ENCODE measurements at regions of chr6 and their contacts with region 1.

Region 1: DNA sequence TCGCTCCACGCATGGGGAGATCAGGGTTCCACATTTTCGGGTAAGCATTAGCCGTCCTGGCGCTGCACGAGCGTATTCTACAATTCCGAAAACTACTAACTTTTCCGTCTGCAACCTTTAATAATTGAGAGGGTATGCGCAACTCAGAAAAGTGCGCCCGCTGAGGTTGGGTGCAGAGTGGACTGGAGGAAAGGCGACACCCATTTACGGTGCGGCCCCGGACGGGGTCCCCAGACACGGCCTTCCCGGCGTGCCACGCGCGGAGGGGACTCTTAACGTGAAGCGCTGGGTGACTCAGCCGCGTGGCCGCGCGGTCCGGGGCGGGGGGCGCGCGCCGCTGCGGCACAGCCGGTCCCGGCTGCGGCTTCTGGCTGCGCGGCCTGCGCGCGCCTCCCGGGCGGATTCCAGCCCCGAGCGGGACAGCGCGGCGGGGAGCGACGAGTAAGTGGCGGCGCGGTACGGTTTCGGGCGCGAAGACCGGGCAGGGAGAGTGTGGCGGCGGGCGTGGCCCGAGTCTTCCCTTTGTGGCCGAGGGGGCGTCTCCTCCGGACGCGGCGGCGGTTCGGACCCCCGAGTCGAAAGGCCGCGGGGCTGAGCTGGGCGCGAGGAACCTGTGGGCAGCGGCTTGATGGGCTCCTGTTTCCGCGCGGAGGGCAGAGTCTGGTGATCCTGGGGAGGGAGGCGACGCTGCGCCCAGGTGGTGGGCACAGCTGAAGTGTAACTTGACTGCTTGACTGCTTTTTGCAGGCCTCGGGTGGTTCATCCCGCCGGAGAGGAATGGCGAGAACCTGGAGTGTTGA is at the starts of genes KCTD20 and PXT1:
- DNase-seq: peak; percentile 93
- H3K4me3 Mint-ChIP-seq: peak within 1 kb of the TSS; percentile 97
- H3K27ac Mint-ChIP-seq: peak within 1 kb of the TSS; percentile 97
- H3K4me1 Mint-ChIP-seq: peaks cover 34% of the 10 kb centered on the region
- H3K27me3 Mint-ChIP-seq: no peaks in the 10 kb centered on the region
- total RNA-seq, gene KCTD20: 48.0 to 51.0 TPM
- total RNA-seq, gene PXT1: 0.22 to 0.29 TPM

Region 2: DNA sequence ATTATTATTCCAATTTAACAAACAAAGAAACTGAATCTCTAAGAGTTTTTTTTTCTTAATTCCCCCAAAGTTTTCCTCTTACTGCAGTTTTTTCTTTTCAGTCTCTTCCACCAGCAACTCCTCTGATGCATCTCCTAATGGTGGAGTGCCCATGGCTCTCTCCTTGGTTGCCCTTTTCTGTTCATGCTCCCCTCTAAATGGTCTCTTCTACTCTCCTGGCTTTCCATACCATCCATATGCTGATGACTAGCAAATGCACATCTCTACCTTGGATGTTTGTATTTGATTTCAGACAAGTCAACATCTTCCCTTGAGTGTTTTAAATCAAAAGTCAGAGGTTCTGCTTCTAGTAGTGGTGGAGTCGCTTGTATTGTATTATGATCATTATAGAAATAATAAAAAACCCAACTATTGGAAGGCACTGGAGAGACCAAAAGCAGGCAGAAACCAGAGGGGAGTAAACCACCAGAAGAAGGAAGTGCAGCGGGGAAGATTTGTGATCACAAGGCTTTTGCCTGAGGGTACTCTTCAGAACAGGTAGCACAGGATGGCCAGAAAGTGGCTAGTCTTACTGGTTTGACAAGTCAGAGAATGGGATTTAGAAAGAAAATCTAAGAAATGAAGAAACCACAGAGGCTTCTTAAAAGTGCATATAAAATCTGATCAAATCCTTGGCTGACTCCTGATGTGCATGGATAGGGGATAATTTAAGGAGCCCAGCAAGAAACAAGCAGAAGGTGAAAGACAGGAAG is 288.7 kb before region 1 on chr6:
- CTCF ChIA-PET with region 1: no interaction called
- POLR2A ChIA-PET with region 1: no interaction called
- intact Hi-C with region 1: no loop called
- DNase-seq: no peak
- H3K4me3 Mint-ChIP-seq: no peak overlapping the region
- H3K27ac Mint-ChIP-seq: no peak overlapping the region
- H3K4me1 Mint-ChIP-seq: peaks cover 4% of the 10 kb centered on the region
- H3K27me3 Mint-ChIP-seq: no peaks in the 10 kb centered on the region

Region 3: GRCh38 chr6:36196880-36197548 is 245.9 kb before region 1 on chr6:
- CTCF ChIA-PET with region 1: no interaction called
- POLR2A ChIA-PET with region 1: no interaction called
- intact Hi-C with region 1: loop called (anchors 5 kb)
- DNase-seq: peak; percentile 100
- H3K4me3 Mint-ChIP-seq: peak overlapping the region; percentile 82
- H3K27ac Mint-ChIP-seq: peak overlapping the region; percentile 90
- H3K4me1 Mint-ChIP-seq: peaks cover 46% of the 10 kb centered on the region
- H3K27me3 Mint-ChIP-seq: no peaks in the 10 kb centered on the region

Region 4: DNA sequence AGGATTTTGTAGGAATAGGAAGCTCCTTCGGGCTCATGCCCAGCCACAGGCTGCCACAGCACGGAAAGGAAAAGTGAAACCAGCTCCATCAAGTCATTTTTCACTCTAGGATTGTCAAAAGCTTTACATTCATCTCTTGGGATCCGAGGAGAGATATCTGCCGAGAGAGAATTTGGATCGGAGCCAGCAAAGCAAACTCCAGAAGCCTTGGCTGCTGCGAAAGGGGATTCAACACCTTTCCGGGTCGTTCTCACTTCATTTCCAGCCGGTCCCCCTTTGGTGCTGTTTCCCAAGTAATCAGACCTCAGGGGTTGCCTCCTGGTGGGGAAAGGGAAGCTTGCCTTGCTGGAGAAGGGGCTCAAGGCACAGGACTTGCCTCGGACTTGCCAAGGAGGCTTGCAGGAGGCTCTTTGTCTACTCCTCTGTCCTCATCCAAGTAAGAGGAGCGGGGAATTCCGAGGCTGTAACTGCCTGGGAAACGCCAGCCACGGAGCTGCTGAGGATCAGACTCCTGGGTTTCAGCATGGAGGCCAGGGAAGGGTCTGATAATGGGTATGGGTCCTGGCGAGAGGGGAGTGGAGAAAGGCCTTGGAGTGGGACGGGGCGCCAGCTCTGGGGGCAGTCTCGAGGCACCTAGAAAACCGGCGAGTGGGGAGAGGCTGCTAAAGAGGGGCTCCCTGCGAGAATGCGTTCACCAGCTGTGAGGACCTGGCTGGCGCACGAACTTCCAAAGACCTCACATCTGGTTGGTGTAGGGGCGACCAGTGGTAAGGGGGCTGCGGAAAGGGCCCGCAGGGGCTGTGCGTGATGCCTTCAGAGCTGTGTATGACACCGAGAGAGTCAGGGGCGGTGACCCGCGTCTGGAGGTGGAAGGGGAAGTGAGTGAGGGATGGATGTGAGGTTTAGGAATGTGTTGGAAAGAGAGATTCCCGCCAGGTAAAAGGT is 56.1 kb before region 1 on chr6:
- CTCF ChIA-PET with region 1: no interaction called
- POLR2A ChIA-PET with region 1: no interaction called
- intact Hi-C with region 1: loop called (anchors 1 kb)
- DNase-seq: peak; percentile 27
- H3K4me3 Mint-ChIP-seq: peak overlapping the region; percentile 76
- H3K27ac Mint-ChIP-seq: peak overlapping the region; percentile 67
- H3K4me1 Mint-ChIP-seq: peaks cover 52% of the 10 kb centered on the region
- H3K27me3 Mint-ChIP-seq: peaks cover 10% of the 10 kb centered on the region

Region 5: GRCh38 chr6:36423101-36423824 is 19.6 kb before region 1 on chr6:
- CTCF ChIA-PET with region 1: interaction called, 12 read pairs
- POLR2A ChIA-PET with region 1: interaction called, 7 read pairs
- intact Hi-C with region 1: loop called (anchors 1 kb)
- DNase-seq: peak; percentile 99
- H3K4me3 Mint-ChIP-seq: peak overlapping the region; percentile 80
- H3K27ac Mint-ChIP-seq: peak overlapping the region; percentile 84
- H3K4me1 Mint-ChIP-seq: peaks cover 17% of the 10 kb centered on the region
- H3K27me3 Mint-ChIP-seq: no peaks in the 10 kb centered on the region

Region 6: DNA sequence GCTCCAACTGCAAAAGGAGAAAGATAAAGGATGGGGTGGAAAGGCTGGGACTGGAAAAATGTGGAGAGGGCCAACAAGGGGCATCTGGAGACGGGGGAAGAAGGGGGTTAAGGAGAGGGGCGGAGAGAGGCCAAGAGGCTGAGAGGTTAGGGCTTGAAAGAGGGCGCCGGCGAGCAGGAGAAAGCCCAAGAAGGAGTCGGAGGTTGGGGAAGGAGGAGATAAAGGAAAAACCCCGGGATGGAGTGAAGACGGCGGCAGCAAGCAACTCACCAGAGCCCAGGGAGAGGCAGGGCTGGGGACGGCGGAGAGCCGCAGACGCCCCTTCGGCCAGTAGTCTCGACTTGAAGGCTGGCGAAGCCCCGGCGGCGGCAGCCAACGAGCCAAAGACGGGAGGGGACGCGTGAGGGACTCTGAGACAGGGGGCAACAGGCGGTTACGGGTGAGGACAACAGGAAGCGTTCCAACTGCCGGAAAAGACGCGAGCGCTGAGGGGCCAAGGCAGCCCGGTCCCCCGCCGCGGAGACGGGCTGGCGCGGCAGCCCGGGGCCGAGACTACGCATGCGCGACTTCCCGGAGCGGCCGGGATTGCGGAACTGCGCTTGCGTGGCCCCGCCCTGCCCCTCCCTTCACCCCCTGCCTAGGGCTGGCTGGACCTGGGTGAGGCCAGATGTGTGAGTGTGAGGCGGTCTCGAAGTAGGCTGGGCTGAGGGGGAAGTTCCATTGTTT is 104.2 kb after region 1 on chr6 and contains the start of gene STK38:
- CTCF ChIA-PET with region 1: no interaction called
- POLR2A ChIA-PET with region 1: no interaction called
- intact Hi-C with region 1: loop called (anchors 1 kb)
- DNase-seq: peak; percentile 97
- H3K4me3 Mint-ChIP-seq: peak within 1 kb of the TSS; percentile 96
- H3K27ac Mint-ChIP-seq: peak within 1 kb of the TSS; percentile 97
- H3K4me1 Mint-ChIP-seq: peaks cover 41% of the 10 kb centered on the region
- H3K27me3 Mint-ChIP-seq: no peaks in the 10 kb centered on the region
- total RNA-seq, gene STK38: 25.8 to 27.5 TPM

Measured in activated CD4-positive, alpha-beta memory T cell treated with anti-CD3 and anti-CD28 coated beads for 36 hours (primary cell).